AG04449 (cell line): ENCODE measurements at regions of chr2 and their contacts with region 1.

Region 1: GRCh38 chr2:85826990-85827878 is 61.6 kb downstream of the ST3GAL5 start:
- DNase-seq: no peak
- H3K4me3 ChIP-seq: no peak overlapping the region; the same call in 1 of the 2 replicates
- CTCF ChIP-seq: peak; percentile 98

Region 2: GRCh38 chr2:85728883-85729824 is 98.1 kb before region 1 on chr2:
- CTCF ChIA-PET with region 1: interaction called, 348 read pairs
- POLR2A ChIA-PET with region 1: no interaction called
- DNase-seq: no peak
- H3K4me3 ChIP-seq: no peak overlapping the region
- CTCF ChIP-seq: peak; percentile 98

Region 3: GRCh38 chr2:85804583-85804982 is 22.7 kb before region 1 on chr2:
- CTCF ChIA-PET with region 1: no interaction called
- POLR2A ChIA-PET with region 1: no interaction called
- DNase-seq: no peak
- H3K4me3 ChIP-seq: no peak overlapping the region
- CTCF ChIP-seq: peak; percentile 24

Region 4: DNA sequence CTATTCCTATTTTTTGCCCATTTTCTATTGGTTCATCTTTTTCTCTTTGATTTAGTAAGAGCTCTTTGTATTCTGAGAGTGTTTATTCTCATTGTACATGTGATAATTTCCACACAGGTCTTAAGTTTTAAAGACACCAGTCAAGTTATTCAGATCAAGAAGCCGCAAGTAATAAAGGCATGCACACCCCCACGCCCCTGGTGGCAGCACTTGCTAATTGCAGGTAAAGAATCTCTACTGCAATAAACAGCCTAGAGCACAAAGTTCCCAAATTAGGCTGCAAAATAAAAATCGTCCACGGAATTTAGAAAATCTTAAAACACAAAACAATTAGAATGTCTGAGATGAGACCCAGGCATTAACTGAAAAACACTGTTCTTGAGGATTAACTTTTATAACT is 16.3 kb after region 1 on chr2:
- CTCF ChIA-PET with region 1: interaction called, 42 read pairs
- POLR2A ChIA-PET with region 1: no interaction called
- DNase-seq: no peak
- H3K4me3 ChIP-seq: no peak overlapping the region
- CTCF ChIP-seq: peak; percentile 19

Region 5: DNA sequence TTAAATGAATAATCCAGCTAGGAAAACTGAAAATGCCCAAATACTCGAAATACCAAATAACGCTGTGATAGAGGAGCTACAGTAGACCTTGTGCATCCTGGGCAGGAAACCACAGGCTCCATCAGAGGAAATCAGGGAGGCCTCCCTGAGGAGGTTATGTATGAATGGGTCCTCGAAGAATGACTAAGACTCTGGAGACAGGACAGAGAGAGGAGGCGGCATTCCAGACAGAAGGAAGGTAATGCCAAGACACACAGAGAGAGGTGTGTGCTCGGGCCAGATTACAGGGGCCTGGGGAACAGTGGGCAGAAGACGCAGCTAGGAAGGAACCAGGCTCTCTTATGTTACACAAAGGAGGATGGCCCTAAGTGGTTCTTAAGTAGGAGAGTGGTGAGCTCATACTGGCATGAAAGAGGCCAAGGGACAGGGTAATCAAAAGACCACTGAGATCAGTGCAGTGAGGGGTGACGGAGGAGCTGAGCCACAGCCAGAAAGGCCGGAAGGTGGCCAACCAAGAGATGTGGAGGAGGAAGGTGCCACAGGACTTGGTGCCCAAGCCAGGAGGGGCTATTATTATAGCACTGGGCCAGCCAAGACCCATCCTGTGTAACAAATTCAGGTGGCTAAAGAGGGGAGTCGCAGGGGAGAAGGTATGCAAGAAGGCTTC is 51.6 kb after region 1 on chr2:
- CTCF ChIA-PET with region 1: interaction called, 11 read pairs
- POLR2A ChIA-PET with region 1: no interaction called
- DNase-seq: no peak
- H3K4me3 ChIP-seq: no peak overlapping the region
- CTCF ChIP-seq: no peak

Region 6: GRCh38 chr2:86035883-86036668 is 208.8 kb after region 1 on chr2:
- CTCF ChIA-PET with region 1: interaction called, 31 read pairs
- POLR2A ChIA-PET with region 1: interaction called, 3 read pairs
- DNase-seq: no peak
- H3K4me3 ChIP-seq: no peak overlapping the region
- CTCF ChIP-seq: peak; percentile 51

Region 7: GRCh38 chr2:86072271-86072858 is 245.1 kb after region 1 on chr2:
- CTCF ChIA-PET with region 1: interaction called, 891 read pairs
- POLR2A ChIA-PET with region 1: no interaction called
- DNase-seq: no peak
- H3K4me3 ChIP-seq: no peak overlapping the region
- CTCF ChIP-seq: no peak

Region 8: GRCh38 chr2:86118133-86118532 is 290.9 kb after region 1 on chr2:
- CTCF ChIA-PET with region 1: interaction called, 13 read pairs
- POLR2A ChIA-PET with region 1: no interaction called
- DNase-seq: no peak
- H3K4me3 ChIP-seq: no peak overlapping the region
- CTCF ChIP-seq: no peak